PC-3 (cell line): ENCODE measurements at regions of chr6 and their contacts with region 1.

Region 1: GRCh38 chr6:134882426-134883038 is 67.4 kb downstream of the ALDH8A1 start:
- DNase-seq: peak; percentile 70
- ATAC-seq: peak; percentile 56
- H3K4me3 ChIP-seq: no peak overlapping the region
- H3K27ac ChIP-seq: no peak overlapping the region
- H3K4me1 ChIP-seq: no peaks in the 10 kb centered on the region
- H3K27me3 ChIP-seq: no peaks in the 10 kb centered on the region
- CTCF ChIP-seq: peak; percentile 91

Region 2: GRCh38 chr6:134111062-134111677 is 771.4 kb before region 1 on chr6:
- CTCF ChIA-PET with region 1: interaction called, 13 read pairs
- POLR2A ChIA-PET with region 1: no interaction called
- intact Hi-C with region 1: no loop called
- DNase-seq: peak; percentile 77
- ATAC-seq: peak; percentile 23; the same call in 1 of the 2 replicates
- H3K4me3 ChIP-seq: no peak overlapping the region
- H3K27ac ChIP-seq: no peak overlapping the region
- H3K4me1 ChIP-seq: peaks cover 14% of the 10 kb centered on the region
- H3K27me3 ChIP-seq: no peaks in the 10 kb centered on the region
- CTCF ChIP-seq: peak; percentile 91

Region 3: GRCh38 chr6:134123666-134124208 is 758.8 kb before region 1 on chr6:
- CTCF ChIA-PET with region 1: interaction called, 6 read pairs
- POLR2A ChIA-PET with region 1: no interaction called
- intact Hi-C with region 1: loop called (anchors 1 kb)
- DNase-seq: peak; percentile 74
- ATAC-seq: peak; percentile 66
- H3K4me3 ChIP-seq: no peak overlapping the region
- H3K27ac ChIP-seq: no peak overlapping the region
- H3K4me1 ChIP-seq: no peaks in the 10 kb centered on the region
- H3K27me3 ChIP-seq: no peaks in the 10 kb centered on the region
- CTCF ChIP-seq: peak; percentile 70

Region 4: GRCh38 chr6:134373282-134373922 is 509.1 kb before region 1 on chr6:
- CTCF ChIA-PET with region 1: no interaction called
- POLR2A ChIA-PET with region 1: no interaction called
- intact Hi-C with region 1: no loop called
- DNase-seq: peak; percentile 51
- ATAC-seq: peak; percentile 58
- H3K4me3 ChIP-seq: no peak overlapping the region
- H3K27ac ChIP-seq: peak overlapping the region; percentile 29
- H3K4me1 ChIP-seq: peaks cover 7% of the 10 kb centered on the region
- H3K27me3 ChIP-seq: no peaks in the 10 kb centered on the region
- CTCF ChIP-seq: no peak

Region 5: DNA sequence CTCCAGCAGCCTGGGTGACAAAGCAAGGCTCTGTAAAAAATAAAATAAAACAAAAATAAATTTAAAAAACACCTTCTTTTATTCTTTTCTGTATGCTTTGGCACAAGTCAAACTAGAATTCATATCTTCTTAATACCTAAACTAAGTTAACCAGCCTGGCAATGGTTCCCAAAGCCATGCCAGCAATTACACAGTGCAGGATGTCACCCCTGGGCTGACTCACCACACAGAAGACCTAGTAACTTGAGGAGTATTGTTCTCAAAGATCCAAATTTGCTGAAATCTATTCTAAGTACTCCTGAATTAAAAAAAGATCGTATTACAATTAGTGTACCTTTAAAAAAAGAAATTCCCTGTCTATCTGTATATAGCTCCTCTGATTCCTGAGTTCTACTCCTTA is 401.9 kb before region 1 on chr6:
- CTCF ChIA-PET with region 1: no interaction called
- POLR2A ChIA-PET with region 1: no interaction called
- intact Hi-C with region 1: no loop called
- DNase-seq: peak; percentile 59
- ATAC-seq: peak; percentile 94
- H3K4me3 ChIP-seq: no peak overlapping the region
- H3K27ac ChIP-seq: no peak overlapping the region
- H3K4me1 ChIP-seq: peaks cover 5% of the 10 kb centered on the region
- H3K27me3 ChIP-seq: no peaks in the 10 kb centered on the region
- CTCF ChIP-seq: no peak

Region 6: GRCh38 chr6:134850721-134851305 is 31.7 kb before region 1 on chr6:
- CTCF ChIA-PET with region 1: no interaction called
- POLR2A ChIA-PET with region 1: no interaction called
- intact Hi-C with region 1: no loop called
- DNase-seq: no peak
- ATAC-seq: no peak
- H3K4me3 ChIP-seq: no peak overlapping the region
- H3K27ac ChIP-seq: no peak overlapping the region
- H3K4me1 ChIP-seq: peaks cover 12% of the 10 kb centered on the region
- H3K27me3 ChIP-seq: no peaks in the 10 kb centered on the region
- CTCF ChIP-seq: no peak

Region 7: DNA sequence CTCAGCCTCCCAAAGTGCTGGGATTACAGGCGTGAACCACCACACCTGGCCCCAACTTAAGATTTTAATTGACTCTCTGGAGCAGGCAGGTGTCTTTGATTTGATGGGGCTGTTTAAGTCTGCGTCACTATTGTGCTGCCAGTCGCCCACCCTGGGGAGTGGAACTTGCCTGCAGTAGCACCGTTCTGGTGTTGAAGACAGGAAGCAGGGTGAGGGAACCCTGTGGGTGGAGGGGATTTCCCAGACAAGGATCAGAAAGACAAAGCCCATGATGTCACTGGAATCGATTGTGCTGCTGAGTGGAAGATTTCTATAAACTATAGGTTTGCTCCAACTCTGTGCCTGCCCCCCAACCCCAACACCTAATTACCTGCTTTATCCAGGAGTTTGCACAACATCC is 56.4 kb after region 1 on chr6:
- CTCF ChIA-PET with region 1: interaction called, 11 read pairs
- POLR2A ChIA-PET with region 1: no interaction called
- intact Hi-C with region 1: no loop called
- DNase-seq: no peak
- ATAC-seq: no peak
- H3K4me3 ChIP-seq: no peak overlapping the region
- H3K27ac ChIP-seq: no peak overlapping the region
- H3K4me1 ChIP-seq: peaks cover 8% of the 10 kb centered on the region
- H3K27me3 ChIP-seq: no peaks in the 10 kb centered on the region
- CTCF ChIP-seq: no peak